GM12878 (cell line): ENCODE measurements at regions of chr5 and their contacts with region 1.

Region 1: GRCh38 chr5:56105511-56106291 is 110.9 kb upstream of the IL6ST start:
- DNase-seq: no peak
- ATAC-seq: peak; percentile 78
- H3K4me3 ChIP-seq: no peak overlapping the region; the same call in 1 of the 2 replicates
- H3K27ac ChIP-seq: no peak overlapping the region
- H3K4me1 ChIP-seq: peaks cover 3% of the 10 kb centered on the region; the same call in 1 of the 2 replicates
- H3K27me3 ChIP-seq: no peaks in the 10 kb centered on the region; a peak in 1 of 4 replicates
- CTCF ChIP-seq: no peak
- EP300 ChIP-seq: 0 out of 4 replicates have a peak, but pooled peaks of 1 of the 2 experiments have one; percentile 16
- POLR2A ChIP-seq: no peak
- RAD21 ChIP-seq: no peak

Region 2: GRCh38 chr5:55370291-55370925 is 735.3 kb before region 1 on chr5:
- CTCF ChIA-PET with region 1: no interaction called
- POLR2A ChIA-PET with region 1: no interaction called
- RAD21 ChIA-PET with region 1: no interaction called
- SMC1A ChIA-PET with region 1: no interaction called
- in situ Hi-C with region 1: no loop called
- intact Hi-C with region 1: no loop called
- DNase-seq: no peak
- ATAC-seq: peak; percentile 44
- H3K4me3 ChIP-seq: no peak overlapping the region
- H3K27ac ChIP-seq: no peak overlapping the region
- H3K4me1 ChIP-seq: 0 out of 2 replicates have a peak, but pooled peaks cover under 1% of the 10 kb centered on the region
- H3K27me3 ChIP-seq: no peaks in the 10 kb centered on the region
- CTCF ChIP-seq: no peak
- EP300 ChIP-seq: no peak
- POLR2A ChIP-seq: no peak
- RAD21 ChIP-seq: no peak

Region 3: DNA sequence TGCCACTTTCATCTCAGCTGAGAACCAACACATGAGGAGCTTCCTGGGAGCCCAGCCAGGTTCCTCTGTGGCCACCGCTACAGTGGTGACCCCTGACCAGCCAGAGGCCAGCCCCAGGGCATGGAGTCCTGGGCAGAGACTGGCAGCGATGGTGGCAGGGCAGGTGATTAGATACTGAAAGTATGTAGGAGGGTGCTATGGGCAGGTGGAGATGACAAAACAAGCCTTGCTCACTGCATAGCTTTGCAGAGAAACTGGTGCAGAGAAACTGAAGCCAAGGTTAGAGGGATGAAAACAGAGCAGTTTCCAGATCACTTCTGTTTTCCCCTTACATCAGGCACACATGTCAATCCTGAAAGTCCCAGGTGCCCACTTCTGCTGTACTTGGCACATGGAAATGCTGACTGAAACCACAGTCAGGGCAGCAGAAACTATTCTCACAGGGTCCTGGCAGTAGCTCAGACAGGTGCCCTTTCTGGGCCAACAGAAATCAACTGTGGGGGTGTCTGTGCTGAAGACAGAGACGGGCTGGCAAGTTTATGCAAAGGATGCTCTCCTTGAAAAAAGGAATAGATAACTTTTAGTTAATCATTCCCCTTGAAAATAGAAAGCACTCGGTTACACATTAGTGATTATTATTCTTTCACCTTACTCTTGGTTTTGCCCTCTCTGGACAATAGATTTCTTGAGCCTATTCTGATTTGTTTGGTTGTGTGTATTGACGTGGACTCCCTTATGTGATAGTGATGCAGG is 37.1 kb after region 1 on chr5:
- CTCF ChIA-PET with region 1: interaction called, 7 read pairs
- POLR2A ChIA-PET with region 1: interaction called, 10 read pairs
- RAD21 ChIA-PET with region 1: interaction called, 8 read pairs
- SMC1A ChIA-PET with region 1: interaction called, 16 read pairs
- in situ Hi-C with region 1: no loop called
- intact Hi-C with region 1: no loop called
- DNase-seq: peak; percentile 95
- ATAC-seq: peak; percentile 85
- H3K4me3 ChIP-seq: no peak overlapping the region
- H3K27ac ChIP-seq: peak overlapping the region; percentile 19; the same call in 1 of the 2 replicates
- H3K4me1 ChIP-seq: peaks cover 25% of the 10 kb centered on the region
- H3K27me3 ChIP-seq: no peaks in the 10 kb centered on the region; a peak in 1 of 4 replicates
- CTCF ChIP-seq: no peak
- EP300 ChIP-seq: peak; percentile 60 to 80; a peak in 3 of 4 replicates
- POLR2A ChIP-seq: no peak
- RAD21 ChIP-seq: no peak